ENCODE measurements at regions of chrX and their contacts with region 1.

Region 1: GRCh38 chrX:115679460-115679859 is 118.5 kb downstream of the PLS3 start:
- DNase-seq: no peak
- ATAC-seq: peak; percentile 58
- H3K4me3 Mint-ChIP-seq: no peak overlapping the region
- H3K27ac Mint-ChIP-seq: peak overlapping the region; percentile 63; the same call in 1 of the 2 replicates
- H3K4me1 Mint-ChIP-seq: peaks cover 21% of the 10 kb centered on the region
- H3K27me3 Mint-ChIP-seq: no peaks in the 10 kb centered on the region
- CTCF ChIP-seq: no peak

Region 2: DNA sequence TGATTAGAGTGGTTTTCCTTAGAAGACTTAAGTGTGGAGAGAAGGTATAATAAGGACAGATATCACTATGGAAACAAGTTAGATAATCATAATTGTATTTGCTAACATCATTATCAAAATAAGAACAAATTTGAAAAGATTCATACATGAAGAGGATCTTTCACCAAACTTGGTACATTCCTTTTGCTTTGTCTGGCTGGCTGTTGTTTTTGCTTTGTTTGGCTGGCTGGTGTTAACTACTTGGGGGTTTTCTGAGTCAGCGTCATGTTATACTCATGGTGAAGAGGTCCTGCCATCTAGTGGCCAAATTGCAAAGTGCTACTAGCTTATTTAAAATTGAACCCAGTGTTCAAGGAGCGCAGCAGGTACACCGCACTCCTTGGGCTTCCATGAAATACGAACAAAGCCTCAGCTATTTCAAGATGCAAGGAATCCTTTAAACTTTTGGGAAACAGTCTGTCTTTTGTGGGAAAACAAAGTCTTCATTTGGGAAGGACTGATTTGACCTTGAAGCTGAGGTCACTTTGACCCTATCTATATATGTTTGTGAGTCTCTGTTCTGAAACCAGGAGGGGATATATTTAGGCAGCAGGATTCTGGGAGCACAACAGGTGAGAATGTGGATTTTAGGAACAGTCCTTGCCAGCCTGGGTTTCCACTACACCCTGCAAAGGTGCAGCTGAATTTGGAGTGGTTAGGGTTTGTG is 11.2 kb after region 1 on chrX:
- CTCF ChIA-PET with region 1: interaction called, 23 read pairs
- POLR2A ChIA-PET with region 1: interaction called, 3 read pairs
- DNase-seq: peak; percentile 60
- ATAC-seq: peak; percentile 76
- H3K4me3 Mint-ChIP-seq: no peak overlapping the region
- H3K27ac Mint-ChIP-seq: peak overlapping the region; percentile 99
- H3K4me1 Mint-ChIP-seq: peaks cover 62% of the 10 kb centered on the region
- H3K27me3 Mint-ChIP-seq: no peaks in the 10 kb centered on the region
- CTCF ChIP-seq: peak; percentile 43; the same call in 1 of the 2 replicates